ENCODE measurements at regions of chr13 and their contacts with region 1.

Region 1: GRCh38 chr13:25901460-25902376 is 150.1 kb downstream of the SHISA2 start:
- DNase-seq: peak; percentile 44
- H3K4me3 Mint-ChIP-seq: no peak overlapping the region
- H3K27ac Mint-ChIP-seq: no peak overlapping the region
- H3K4me1 Mint-ChIP-seq: peaks cover 30% of the 10 kb centered on the region
- H3K27me3 Mint-ChIP-seq: peaks cover 7% of the 10 kb centered on the region

Region 2: DNA sequence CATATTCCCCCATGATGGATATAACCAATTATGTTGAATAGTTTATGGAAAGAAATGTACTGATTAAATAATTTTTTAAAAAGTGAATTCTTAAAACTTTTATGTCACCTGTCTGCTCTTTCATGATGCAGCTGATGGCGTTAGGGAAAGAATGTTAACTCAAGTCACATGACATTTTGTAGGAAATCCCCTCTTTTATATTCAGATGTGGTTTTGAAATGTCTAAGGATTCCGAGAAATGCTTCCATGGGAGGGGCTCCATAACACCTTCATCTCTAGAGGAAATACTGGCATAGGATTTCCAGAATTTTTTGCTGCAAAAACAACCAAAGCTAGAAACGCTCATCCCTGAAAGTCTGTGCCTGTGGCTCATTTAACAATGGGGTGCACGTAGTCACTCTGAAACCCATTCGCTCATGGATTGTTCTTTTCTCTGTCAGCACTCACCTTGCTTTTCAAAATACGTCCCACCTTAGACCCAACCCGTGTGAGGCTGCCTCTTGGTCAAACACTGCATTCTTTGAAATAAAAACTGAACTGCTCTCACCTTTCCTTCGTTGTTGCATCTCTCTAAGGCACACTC is 138.8 kb before region 1 on chr13:
- intact Hi-C with region 1: loop called (anchors 2 kb)
- DNase-seq: no peak
- H3K4me3 Mint-ChIP-seq: no peak overlapping the region
- H3K27ac Mint-ChIP-seq: no peak overlapping the region
- H3K4me1 Mint-ChIP-seq: peaks cover 16% of the 10 kb centered on the region
- H3K27me3 Mint-ChIP-seq: peaks cover 3% of the 10 kb centered on the region

Region 3: GRCh38 chr13:25847145-25847544 is 54.6 kb before region 1 on chr13:
- intact Hi-C with region 1: loop called (anchors 1 kb)
- DNase-seq: no peak
- H3K4me3 Mint-ChIP-seq: no peak overlapping the region
- H3K27ac Mint-ChIP-seq: no peak overlapping the region
- H3K4me1 Mint-ChIP-seq: peaks cover 32% of the 10 kb centered on the region
- H3K27me3 Mint-ChIP-seq: peaks cover 6% of the 10 kb centered on the region

Region 4: DNA sequence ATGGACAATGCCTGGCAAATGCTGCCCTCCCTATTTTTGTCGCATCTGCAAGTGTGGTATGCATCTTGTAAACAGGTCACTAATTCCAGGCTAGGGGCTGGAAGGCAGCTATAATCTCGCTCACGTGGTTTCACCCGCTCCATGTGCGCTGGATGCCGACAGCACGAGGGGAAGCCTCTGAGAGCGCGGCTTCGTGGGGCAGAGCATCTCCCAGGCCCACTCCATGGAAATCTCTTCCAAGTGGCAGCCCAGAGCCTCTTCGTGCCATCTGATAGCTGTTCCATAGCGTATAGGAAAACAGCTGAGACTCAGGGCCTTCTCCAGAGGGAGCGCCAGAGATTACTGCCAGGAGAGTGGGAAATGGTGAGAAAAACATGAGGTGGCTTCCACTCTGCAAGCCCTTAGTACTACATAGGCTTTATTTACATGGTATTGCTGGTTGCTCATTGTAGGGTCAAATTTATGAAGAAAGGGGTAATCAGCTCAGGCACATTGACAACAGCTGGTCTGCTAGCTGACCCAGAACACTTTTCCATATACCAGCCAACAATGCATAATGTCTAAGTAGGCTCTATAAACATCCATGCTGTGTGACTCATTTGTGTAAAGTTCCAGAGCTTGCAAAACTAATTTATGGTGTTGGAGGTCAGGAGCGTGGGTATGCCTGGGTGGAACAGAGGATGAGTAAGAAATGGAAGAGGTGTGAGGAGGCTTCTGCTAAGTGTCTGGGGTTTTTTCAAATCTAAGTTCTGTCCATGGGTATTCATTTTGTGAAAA is 15.1 kb before region 1 on chr13:
- intact Hi-C with region 1: loop called (anchors 1 kb)
- DNase-seq: no peak
- H3K4me3 Mint-ChIP-seq: no peak overlapping the region
- H3K27ac Mint-ChIP-seq: no peak overlapping the region
- H3K4me1 Mint-ChIP-seq: peaks cover 37% of the 10 kb centered on the region
- H3K27me3 Mint-ChIP-seq: no peaks in the 10 kb centered on the region

Region 5: DNA sequence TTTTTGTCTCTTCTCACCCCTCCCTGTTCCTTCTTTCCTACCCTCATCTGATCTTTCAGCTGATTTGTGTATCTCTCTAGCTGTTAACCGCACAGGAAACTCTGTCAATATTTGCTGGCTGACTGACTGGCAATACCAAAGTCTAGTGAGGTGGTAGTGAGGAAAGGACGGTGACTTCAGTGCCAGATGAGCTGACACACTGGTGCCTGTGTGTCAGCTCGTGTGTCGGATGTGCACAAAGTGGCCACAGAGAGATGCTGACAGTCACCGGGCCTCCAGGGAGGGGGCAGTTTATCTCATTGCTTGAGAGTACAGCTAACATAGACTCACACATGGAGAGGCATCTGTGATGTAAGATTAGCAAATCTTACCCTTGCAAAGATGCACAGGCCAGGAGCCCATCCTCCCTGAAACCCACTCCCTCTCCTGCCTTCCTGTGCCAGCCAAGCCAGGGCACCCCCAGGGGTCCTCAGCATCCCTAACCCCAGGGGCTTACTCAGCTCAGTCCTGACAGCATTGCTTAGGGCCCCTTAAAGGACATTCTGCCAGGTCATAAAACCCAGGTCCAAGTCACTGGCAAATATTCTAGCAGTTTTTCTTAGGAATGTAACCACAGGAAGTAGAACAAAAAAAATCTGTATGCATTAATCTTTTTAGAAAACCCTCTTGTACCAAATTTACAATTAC is 69.9 kb after region 1 on chr13:
- intact Hi-C with region 1: loop called (anchors 5 kb)
- DNase-seq: peak; percentile 31
- H3K4me3 Mint-ChIP-seq: no peak overlapping the region
- H3K27ac Mint-ChIP-seq: no peak overlapping the region
- H3K4me1 Mint-ChIP-seq: peaks cover 33% of the 10 kb centered on the region
- H3K27me3 Mint-ChIP-seq: no peaks in the 10 kb centered on the region

Region 6: GRCh38 chr13:26007261-26008125 is 105.8 kb after region 1 on chr13:
- intact Hi-C with region 1: loop called (anchors 5 kb)
- DNase-seq: no peak
- H3K4me3 Mint-ChIP-seq: no peak overlapping the region
- H3K27ac Mint-ChIP-seq: no peak overlapping the region
- H3K4me1 Mint-ChIP-seq: peaks cover 10% of the 10 kb centered on the region
- H3K27me3 Mint-ChIP-seq: peaks cover 8% of the 10 kb centered on the region

Region 7: GRCh38 chr13:26045142-26045541 is 143.4 kb after region 1 on chr13:
- intact Hi-C with region 1: loop called (anchors 2 kb)
- DNase-seq: no peak
- H3K4me3 Mint-ChIP-seq: no peak overlapping the region
- H3K27ac Mint-ChIP-seq: no peak overlapping the region
- H3K4me1 Mint-ChIP-seq: peaks cover 13% of the 10 kb centered on the region
- H3K27me3 Mint-ChIP-seq: peaks cover 44% of the 10 kb centered on the region

Measured in activated T-helper 2 cell treated with anti-CD3 and anti-CD28 coated beads, Interferon-gamma antibody, Interleukin-2, Interleukin-4, amounts not matched to agents 10 μg/mL and 5 μg/mL and 100 μg/mL, durations not matched to agents 14 hours and 24 hours and 36 hours (primary cell).